A549 (cell line): ENCODE measurements at regions of chr14 and their contacts with region 1.

Region 1: GRCh38 chr14:68788996-68789820 is 3.7 kb downstream of the ZFP36L1 start:
- DNase-seq: peak; percentile 45 to 89
- ATAC-seq: peak in 1 of 2 experiments; percentile 5; a peak in 3 of 6 replicates
- H3K4me3 ChIP-seq: peak overlapping the region; percentile 95
- H3K27ac ChIP-seq: peak overlapping the region; percentile 99 to 100
- H3K4me1 ChIP-seq: peaks cover 41% of the 10 kb centered on the region
- CTCF ChIP-seq: peak; percentile 67
- EP300 ChIP-seq: no peak
- POLR2A ChIP-seq: no peak
- RAD21 ChIP-seq: peak; percentile 79 to 90

Region 2: GRCh38 chr14:67943947-67944346 is 845.3 kb before region 1 on chr14:
- CTCF ChIA-PET with region 1: interaction called, 9 read pairs
- POLR2A ChIA-PET with region 1: interaction called, 20 read pairs
- DNase-seq: peak; percentile 44 to 92
- ATAC-seq: peak; percentile 88 to 89
- H3K4me3 ChIP-seq: no peak overlapping the region
- H3K27ac ChIP-seq: peak overlapping the region; percentile 82 to 86
- H3K4me1 ChIP-seq: peaks cover 51% of the 10 kb centered on the region
- CTCF ChIP-seq: peak; percentile 93
- EP300 ChIP-seq: peak in 1 of 2 experiments; percentile 18; a peak in 1 of 5 replicates
- POLR2A ChIP-seq: no peak
- RAD21 ChIP-seq: peak; percentile 96 to 98

Region 3: DNA sequence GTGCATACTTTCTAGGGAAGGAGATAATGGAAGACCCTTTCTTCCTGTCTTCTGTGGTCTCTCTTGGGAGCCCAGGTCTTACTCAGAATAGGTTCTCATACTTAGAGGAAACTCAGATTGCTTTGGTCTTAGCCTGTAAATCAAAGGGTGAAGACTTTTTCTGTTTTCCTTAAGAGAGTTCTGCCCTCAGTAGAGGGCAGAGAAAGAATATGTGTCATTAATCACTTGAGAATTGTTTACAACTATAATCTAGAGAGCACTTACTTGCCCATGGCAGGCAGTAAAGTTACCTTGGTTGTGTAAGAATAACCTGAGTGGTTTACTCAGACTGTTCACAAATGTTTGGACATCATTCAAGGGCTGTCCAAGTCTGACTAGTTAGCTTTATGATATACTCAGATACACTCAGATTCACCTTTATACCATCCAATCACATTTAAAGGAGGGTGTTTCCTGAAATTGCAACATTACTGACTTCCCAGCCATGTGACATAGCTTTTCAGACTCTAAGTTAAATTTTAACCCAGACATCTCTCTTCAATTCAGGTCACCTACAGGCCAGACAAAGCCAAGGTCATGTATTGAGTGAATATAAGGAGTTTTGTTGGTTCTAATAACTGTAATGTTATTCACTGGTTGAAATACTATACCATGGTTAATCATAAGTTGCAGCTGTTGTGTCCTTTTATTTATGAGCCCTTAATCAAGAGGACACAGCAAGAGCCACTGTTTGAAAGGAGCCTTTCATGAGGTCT is 597.5 kb before region 1 on chr14:
- CTCF ChIA-PET with region 1: no interaction called
- POLR2A ChIA-PET with region 1: interaction called, 53 read pairs
- DNase-seq: peak; percentile 62 to 99
- ATAC-seq: peak; percentile 98
- H3K4me3 ChIP-seq: peak overlapping the region; percentile 6; the same call in 1 of the 3 replicates
- H3K27ac ChIP-seq: peak overlapping the region; percentile 93 to 98
- H3K4me1 ChIP-seq: peaks cover 66% of the 10 kb centered on the region
- CTCF ChIP-seq: no peak; the same call in 2 of the 3 replicates
- EP300 ChIP-seq: peak; percentile 98 to 99
- POLR2A ChIP-seq: no peak
- RAD21 ChIP-seq: peak; percentile 60 to 85

Region 4: GRCh38 chr14:68232300-68233055 is 556.7 kb before region 1 on chr14:
- CTCF ChIA-PET with region 1: interaction called, 5 read pairs
- POLR2A ChIA-PET with region 1: interaction called, 24 read pairs
- DNase-seq: peak; percentile 77 to 98
- ATAC-seq: peak; percentile 96
- H3K4me3 ChIP-seq: no peak overlapping the region
- H3K27ac ChIP-seq: peak overlapping the region; percentile 95 to 96
- H3K4me1 ChIP-seq: peaks cover 62% of the 10 kb centered on the region
- CTCF ChIP-seq: no peak
- EP300 ChIP-seq: peak; percentile 92 to 98
- POLR2A ChIP-seq: no peak
- RAD21 ChIP-seq: peak; percentile 40 to 64

Region 5: GRCh38 chr14:68466491-68467032 is 322.6 kb before region 1 on chr14:
- CTCF ChIA-PET with region 1: interaction called, 4 read pairs
- POLR2A ChIA-PET with region 1: interaction called, 15 read pairs
- DNase-seq: peak; percentile 84 to 95
- ATAC-seq: peak; percentile 79 to 83
- H3K4me3 ChIP-seq: no peak overlapping the region
- H3K27ac ChIP-seq: peak overlapping the region; percentile 93 to 100
- H3K4me1 ChIP-seq: peaks cover 93% of the 10 kb centered on the region
- CTCF ChIP-seq: no peak
- EP300 ChIP-seq: peak; percentile 41 to 55; a peak in 2 of 5 replicates
- POLR2A ChIP-seq: no peak
- RAD21 ChIP-seq: peak; percentile 16 to 35; a peak in 3 of 5 replicates

Region 6: DNA sequence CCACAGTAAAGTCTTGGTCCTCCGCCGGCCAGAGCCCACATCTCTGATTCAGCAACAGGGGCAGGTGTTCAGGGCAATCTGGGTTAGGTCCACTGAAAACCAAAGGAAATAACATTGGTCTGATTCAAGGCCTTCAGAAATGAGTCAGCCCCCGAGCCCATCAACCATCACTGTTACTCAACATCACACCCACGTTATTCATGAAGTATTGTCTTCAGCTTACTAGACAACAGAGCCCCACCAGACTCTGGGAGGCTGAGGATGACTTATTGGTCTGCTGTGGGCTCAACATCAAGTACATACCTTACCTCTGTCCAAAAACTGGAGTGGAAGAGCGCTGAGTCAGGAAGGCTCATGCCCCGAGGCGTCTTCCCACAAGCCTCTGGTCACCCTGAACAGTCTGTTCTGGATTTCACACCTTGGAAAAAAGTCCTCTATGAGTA is 93.9 kb before region 1 on chr14:
- CTCF ChIA-PET with region 1: interaction called, 4 read pairs
- POLR2A ChIA-PET with region 1: interaction called, 13 read pairs
- DNase-seq: peak; percentile 92 to 97
- ATAC-seq: peak; percentile 94 to 96
- H3K4me3 ChIP-seq: no peak overlapping the region
- H3K27ac ChIP-seq: peak overlapping the region; percentile 86 to 94
- H3K4me1 ChIP-seq: peaks cover 34% of the 10 kb centered on the region
- CTCF ChIP-seq: no peak
- EP300 ChIP-seq: peak; percentile 84 to 90; a peak in 4 of 5 replicates
- POLR2A ChIP-seq: no peak
- RAD21 ChIP-seq: peak; percentile 40 to 64